ENCODE measurements at regions of chr20 and their contacts with region 1.

Region 1: GRCh38 chr20:9220874-9221547 is 152.1 kb downstream of the PLCB4 start:
- DNase-seq: no peak
- H3K4me3 ChIP-seq: no peak overlapping the region
- H3K27ac ChIP-seq: peak overlapping the region in 2 of 4 donors; percentile 7 to 78
- H3K4me1 ChIP-seq: peaks cover 31 to 53% (median 37%) of the 10 kb centered on the region in 4 donors
- H3K27me3 ChIP-seq: no peaks in the 10 kb centered on the region
- CTCF ChIP-seq: no peak
- EP300 ChIP-seq: no peak
- POLR2A ChIP-seq: no peak

Region 2: DNA sequence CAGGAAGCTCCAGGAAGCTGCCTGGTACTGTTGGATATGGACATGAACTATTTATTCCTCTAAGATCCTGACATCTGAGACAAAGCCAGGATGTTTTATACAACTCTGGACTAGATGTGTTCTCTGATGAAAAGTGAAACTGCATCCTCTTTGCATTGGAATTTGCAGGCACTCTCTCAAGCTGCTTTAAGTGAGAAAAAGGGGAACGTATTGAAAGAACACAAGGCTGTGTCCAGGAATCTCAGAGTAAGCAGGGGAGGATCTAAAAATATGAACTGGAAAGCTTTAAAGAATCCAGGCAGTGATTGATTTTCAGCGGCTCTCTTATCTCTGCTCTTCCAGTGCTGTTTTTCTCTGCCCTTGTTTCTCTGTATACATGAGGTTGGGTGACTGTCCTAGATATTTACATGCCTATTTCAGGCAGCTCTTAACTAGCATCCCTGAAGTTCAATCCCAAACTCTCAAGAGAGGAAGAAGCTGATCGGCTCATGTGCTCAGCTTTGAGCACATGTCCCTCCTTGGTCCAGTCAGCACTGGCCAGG is 41.7 kb after region 1 on chr20:
- intact Hi-C with region 1: no loop called
- DNase-seq: no peak
- H3K4me3 ChIP-seq: peak overlapping the region; percentile 11 to 31 (median 22)
- H3K27ac ChIP-seq: peak overlapping the region; percentile 30 to 54 (median 42)
- H3K4me1 ChIP-seq: peaks cover 15 to 19% (median 17%) of the 10 kb centered on the region in 4 donors
- H3K27me3 ChIP-seq: no peaks in the 10 kb centered on the region
- CTCF ChIP-seq: no peak
- EP300 ChIP-seq: no peak
- POLR2A ChIP-seq: no peak

Region 3: GRCh38 chr20:9344083-9344920 is 123.3 kb after region 1 on chr20:
- intact Hi-C with region 1: loop called (anchors 10 kb)
- DNase-seq: no peak
- H3K4me3 ChIP-seq: no peak overlapping the region
- H3K27ac ChIP-seq: peak overlapping the region; percentile 54 to 73 (median 57)
- H3K4me1 ChIP-seq: peaks cover 22 to 44% (median 33%) of the 10 kb centered on the region in 4 donors
- H3K27me3 ChIP-seq: no peaks in the 10 kb centered on the region
- CTCF ChIP-seq: no peak
- EP300 ChIP-seq: no peak
- POLR2A ChIP-seq: no peak